Activated naive CD4-positive, alpha-beta T cell treated with anti-CD3 and anti-CD28 coated beads for 36 hours (primary cell): ENCODE measurements at regions of chr15 and their contacts with region 1.

Region 1: DNA sequence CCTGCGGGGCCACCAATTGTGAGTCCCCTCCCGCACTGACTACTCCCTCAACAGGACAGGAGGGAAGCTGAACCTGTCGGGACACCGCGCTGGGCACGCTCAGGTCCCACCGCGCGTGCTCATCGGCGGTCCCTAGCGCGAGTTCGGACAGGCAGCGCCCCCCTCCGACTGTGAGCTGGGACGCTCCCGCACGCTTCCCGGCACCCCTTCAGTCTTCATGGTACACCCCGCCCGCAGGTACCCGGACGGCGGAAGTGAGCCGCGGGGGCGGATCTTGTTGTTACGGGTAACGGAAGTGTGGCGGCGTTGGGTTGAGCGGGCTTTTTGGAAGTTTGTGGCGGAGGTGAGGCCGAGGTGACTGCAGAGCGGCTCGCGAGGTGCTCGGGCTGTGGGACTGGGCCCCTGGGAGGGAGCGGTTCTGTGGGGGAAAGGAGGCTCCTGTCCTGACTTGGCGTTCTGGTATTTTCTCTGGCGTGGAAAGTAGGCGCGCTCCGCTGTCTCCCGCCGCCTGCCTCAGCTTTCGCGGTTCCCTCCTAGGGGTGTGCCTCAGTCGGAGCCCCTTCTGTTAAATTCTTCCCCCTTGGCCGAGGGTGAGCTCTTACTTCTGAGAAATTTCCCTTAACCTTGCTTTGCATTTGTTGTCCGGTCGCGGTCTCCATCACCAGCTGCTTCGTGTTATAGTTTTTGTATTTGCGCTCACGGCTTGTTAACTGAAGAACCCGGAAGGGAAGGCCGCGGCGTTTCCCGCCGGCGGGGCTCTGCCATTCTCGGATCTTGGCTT is at the start of gene FANCI:
- DNase-seq: peak; percentile 99
- H3K4me3 Mint-ChIP-seq: peak within 1 kb of the TSS; percentile 98
- H3K27ac Mint-ChIP-seq: peak within 1 kb of the TSS; percentile 93
- H3K4me1 Mint-ChIP-seq: peaks cover 31% of the 10 kb centered on the region
- H3K27me3 Mint-ChIP-seq: no peaks in the 10 kb centered on the region
- total RNA-seq, gene FANCI: 268 to 283 TPM

Region 2: DNA sequence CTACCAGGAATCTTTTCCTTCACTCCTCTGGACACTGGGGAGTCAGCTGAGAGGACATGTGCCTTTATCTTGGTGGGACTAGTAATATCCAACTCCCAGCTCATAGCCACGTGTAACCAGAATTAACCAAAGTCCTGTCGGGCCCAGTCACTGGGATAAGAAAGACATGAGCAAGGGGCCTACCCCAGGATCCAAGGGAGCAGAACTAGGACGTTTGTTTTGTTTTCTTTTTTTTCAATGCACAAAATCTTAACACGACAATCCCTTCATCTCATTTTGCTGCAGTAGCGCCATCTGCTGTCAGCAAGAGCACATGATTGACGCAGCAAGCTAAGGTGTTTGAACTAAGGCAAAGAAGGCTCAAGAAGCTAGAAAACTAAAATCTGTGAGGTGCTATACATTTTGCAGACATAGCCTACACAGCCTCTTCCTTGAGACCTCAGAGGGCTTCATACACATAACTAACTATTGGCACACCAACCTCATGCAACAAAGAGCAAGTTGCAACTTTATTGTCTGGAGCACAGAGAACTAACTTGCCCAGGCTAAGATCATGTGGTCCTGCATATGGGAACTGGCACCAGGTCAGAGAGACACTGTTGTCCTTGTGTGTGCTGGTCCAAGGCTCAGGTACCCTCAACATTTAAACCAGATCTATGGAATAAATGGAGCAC is 66.1 kb before region 1 on chr15:
- CTCF ChIA-PET with region 1: no interaction called
- intact Hi-C with region 1: loop called (anchors 1 kb)
- DNase-seq: peak; percentile 86
- H3K4me3 Mint-ChIP-seq: no peak overlapping the region
- H3K27ac Mint-ChIP-seq: peak overlapping the region; percentile 94
- H3K4me1 Mint-ChIP-seq: peaks cover 46% of the 10 kb centered on the region
- H3K27me3 Mint-ChIP-seq: no peaks in the 10 kb centered on the region

Region 3: DNA sequence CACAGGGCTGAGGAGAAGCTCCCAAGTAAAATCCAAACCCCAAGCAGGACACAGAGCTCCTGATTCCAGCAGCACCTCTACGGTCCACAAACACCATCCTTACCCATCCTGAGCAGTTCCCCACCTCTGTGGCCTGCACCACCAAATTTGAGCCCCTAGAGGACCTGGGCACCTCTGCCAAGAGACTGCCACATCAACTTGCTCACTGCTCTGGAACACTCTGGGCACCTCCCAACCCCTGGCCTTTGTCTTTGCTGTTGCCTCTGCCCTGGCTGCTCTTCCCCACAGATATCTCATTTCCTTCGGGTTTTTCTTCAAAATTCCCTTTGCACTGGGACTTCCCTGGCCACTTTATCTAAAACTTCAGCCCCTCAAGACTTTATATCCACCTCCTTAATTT is 28.3 kb before region 1 on chr15:
- CTCF ChIA-PET with region 1: no interaction called
- intact Hi-C with region 1: no loop called
- DNase-seq: no peak
- H3K4me3 Mint-ChIP-seq: no peak overlapping the region
- H3K27ac Mint-ChIP-seq: no peak overlapping the region
- H3K4me1 Mint-ChIP-seq: peaks cover 4% of the 10 kb centered on the region
- H3K27me3 Mint-ChIP-seq: no peaks in the 10 kb centered on the region

Region 4: GRCh38 chr15:89334510-89335288 is 90.8 kb after region 1 on chr15 and contains the start of gene POLG:
- CTCF ChIA-PET with region 1: interaction called, 3 read pairs
- intact Hi-C with region 1: loop called (anchors 1 kb)
- DNase-seq: peak; percentile 99
- H3K4me3 Mint-ChIP-seq: peak within 1 kb of the TSS; percentile 90
- H3K27ac Mint-ChIP-seq: peak within 1 kb of the TSS; percentile 94
- H3K4me1 Mint-ChIP-seq: peaks cover 52% of the 10 kb centered on the region
- H3K27me3 Mint-ChIP-seq: peaks cover 3% of the 10 kb centered on the region
- total RNA-seq, gene POLG: 93.0 to 96.5 TPM

Region 5: DNA sequence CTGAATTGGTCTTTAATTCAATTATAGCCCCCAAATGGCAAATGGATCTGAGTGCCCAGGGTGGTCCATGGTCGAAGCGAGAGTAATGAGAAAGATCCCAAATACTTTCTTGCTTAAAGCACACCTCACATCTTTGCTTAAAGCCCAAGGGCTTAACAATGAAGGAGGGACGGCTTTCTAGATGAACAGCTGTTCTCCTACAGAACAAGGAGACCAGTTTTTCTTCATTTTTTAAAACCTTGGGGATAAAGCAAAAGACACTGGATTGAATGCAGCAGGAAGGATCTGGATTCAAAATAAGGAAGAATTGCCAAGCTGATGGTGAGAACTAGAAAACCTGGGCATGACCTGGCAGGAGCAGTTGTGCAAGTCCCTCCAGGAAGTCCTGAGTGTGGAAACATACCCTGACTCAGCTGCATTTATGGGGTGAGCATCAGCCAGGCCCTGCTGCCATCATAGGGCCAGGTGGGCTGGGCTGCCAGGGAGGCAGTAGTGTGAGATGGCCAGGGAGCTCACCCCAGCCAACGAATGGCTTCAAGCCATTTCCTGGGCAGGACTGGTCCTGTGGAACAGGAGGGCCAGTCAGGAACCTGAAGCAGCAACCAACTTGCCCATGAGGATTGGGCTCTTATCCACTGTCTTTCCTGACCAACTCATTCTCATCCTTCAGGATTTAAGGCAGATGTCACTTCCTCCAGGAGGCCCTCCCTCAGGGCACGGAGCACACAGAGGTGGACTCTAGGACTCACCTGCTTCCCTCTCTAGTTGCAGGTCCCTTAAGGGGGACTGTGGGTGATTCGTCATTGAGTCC is 270.9 kb after region 1 on chr15:
- CTCF ChIA-PET with region 1: no interaction called
- intact Hi-C with region 1: no loop called
- DNase-seq: no peak
- H3K4me3 Mint-ChIP-seq: no peak overlapping the region
- H3K27ac Mint-ChIP-seq: no peak overlapping the region
- H3K4me1 Mint-ChIP-seq: no peaks in the 10 kb centered on the region
- H3K27me3 Mint-ChIP-seq: peaks cover 15% of the 10 kb centered on the region

Region 6: GRCh38 chr15:89575146-89575655 is 331.3 kb after region 1 on chr15 and contains the start of gene TICRR:
- CTCF ChIA-PET with region 1: no interaction called
- intact Hi-C with region 1: loop called (anchors 2 kb)
- DNase-seq: peak; percentile 98
- H3K4me3 Mint-ChIP-seq: peak within 1 kb of the TSS; percentile 86
- H3K27ac Mint-ChIP-seq: peak within 1 kb of the TSS; percentile 28
- H3K4me1 Mint-ChIP-seq: peaks cover 18% of the 10 kb centered on the region
- H3K27me3 Mint-ChIP-seq: peaks cover 4% of the 10 kb centered on the region
- total RNA-seq, gene TICRR: 20.7 to 21.0 TPM